A549 (cell line): ENCODE measurements at regions of chr1 and their contacts with region 1.

Region 1: DNA sequence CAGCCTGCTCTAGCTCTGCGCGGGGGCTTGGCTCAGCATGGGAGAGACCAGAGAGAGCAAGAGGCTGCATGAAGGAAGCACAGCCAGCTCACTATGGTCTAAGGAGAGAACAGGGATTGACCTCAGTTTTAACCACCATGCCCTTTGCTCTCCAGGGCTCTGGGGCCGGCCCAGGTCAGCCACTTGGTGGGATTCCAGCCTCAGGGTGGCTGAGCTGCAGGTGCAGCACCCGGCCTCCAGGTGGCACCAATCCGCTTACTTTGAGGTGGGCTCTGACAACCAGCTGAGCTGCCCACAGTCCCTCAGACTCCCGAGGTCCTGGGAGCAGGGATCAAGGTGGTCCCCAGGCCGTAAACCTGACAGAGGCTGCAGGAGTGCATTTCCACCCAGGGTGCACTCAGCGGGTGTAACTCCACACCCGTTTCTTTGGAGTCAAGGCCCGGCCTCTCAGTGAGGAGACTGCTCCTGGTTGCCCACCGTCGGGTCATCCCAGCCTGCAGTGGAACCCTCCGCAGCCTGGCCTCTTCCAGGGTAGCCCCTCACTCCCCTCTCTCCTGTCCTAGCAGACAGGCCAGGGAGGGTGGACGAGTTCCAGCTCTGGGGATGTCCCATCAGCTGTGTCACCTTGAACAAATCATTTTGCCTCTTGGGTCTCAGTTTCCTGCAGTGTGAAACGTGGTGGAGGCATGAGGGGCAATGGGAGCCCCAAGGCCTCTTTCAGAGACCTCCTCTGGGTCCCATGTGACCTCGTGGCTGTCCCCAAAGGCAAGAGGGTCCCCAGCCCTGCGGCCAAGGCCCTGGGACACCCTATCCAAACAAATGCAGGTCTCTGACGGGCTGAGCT is 607 bp upstream of the LGR6 start:
- DNase-seq: peak; percentile 60 to 64
- ATAC-seq: peak; percentile 37 to 78; a peak in 5 of 6 replicates
- H3K4me3 ChIP-seq: peak overlapping the region; percentile 36; the same call in 1 of the 3 replicates
- H3K27ac ChIP-seq: peak overlapping the region; percentile 56 to 76; a peak in 5 of 6 replicates
- H3K4me1 ChIP-seq: peaks cover 9% of the 10 kb centered on the region; the same call in 2 of the 3 replicates
- CTCF ChIP-seq: peak; percentile 88
- EP300 ChIP-seq: no peak
- POLR2A ChIP-seq: no peak
- RAD21 ChIP-seq: peak; percentile 87 to 91

Region 2: GRCh38 chr1:202210385-202210784 is 17.4 kb after region 1 on chr1:
- CTCF ChIA-PET with region 1: interaction called, 42 read pairs
- POLR2A ChIA-PET with region 1: no interaction called
- DNase-seq: peak in 1 of 2 experiments; percentile 52
- ATAC-seq: peak; percentile 73 to 75
- H3K4me3 ChIP-seq: no peak overlapping the region
- H3K27ac ChIP-seq: no peak overlapping the region
- H3K4me1 ChIP-seq: peaks cover 11% of the 10 kb centered on the region
- CTCF ChIP-seq: 0 out of 3 replicates have a peak, but pooled peaks have one; percentile 7
- EP300 ChIP-seq: no peak
- POLR2A ChIP-seq: no peak
- RAD21 ChIP-seq: peak in 1 of 2 experiments; percentile 29; a peak in 3 of 5 replicates

Region 3: DNA sequence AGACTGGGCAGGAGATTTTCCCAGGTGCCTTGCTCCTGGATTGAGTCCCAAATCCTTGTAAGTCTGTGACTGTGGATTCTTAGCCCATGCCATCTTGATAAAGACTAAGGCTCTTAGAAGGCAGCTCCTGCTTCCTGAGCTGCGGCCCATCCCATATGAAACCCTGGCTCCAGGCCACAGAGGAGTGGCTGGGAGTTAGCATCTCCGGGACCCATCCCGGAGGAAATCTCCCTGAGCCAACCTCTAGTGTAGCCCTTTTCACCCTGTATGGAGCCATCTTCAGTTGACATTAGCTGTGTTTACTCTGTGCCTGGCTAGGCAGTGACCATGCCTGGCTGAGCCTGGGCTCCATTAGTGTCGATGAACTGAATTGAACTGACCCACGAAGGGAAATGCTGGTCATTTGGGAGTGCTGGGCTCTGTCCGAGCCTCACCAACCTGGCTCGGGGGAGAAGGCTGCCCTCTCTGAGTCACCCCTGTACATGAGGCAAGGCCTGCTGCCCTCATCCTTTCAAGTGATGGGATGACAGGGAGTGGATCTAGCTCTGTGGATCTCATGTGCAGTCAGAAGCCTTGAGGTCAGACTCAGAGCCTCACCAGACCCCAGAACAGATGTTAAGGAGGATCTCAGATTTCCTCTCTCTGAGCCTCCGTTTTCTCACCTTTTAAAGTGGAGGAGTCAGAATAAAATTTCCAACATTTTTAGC is 38.1 kb after region 1 on chr1:
- CTCF ChIA-PET with region 1: interaction called, 50 read pairs
- POLR2A ChIA-PET with region 1: interaction called, 6 read pairs
- DNase-seq: no peak
- ATAC-seq: no peak
- H3K4me3 ChIP-seq: no peak overlapping the region
- H3K27ac ChIP-seq: peak overlapping the region in 1 of 2 experiments; percentile 3; a peak in 2 of 6 replicates
- H3K4me1 ChIP-seq: peaks cover 12% of the 10 kb centered on the region
- CTCF ChIP-seq: no peak
- EP300 ChIP-seq: no peak
- POLR2A ChIP-seq: no peak
- RAD21 ChIP-seq: no peak

Region 4: GRCh38 chr1:202247894-202248681 is 55.1 kb after region 1 on chr1:
- CTCF ChIA-PET with region 1: interaction called, 14 read pairs
- POLR2A ChIA-PET with region 1: no interaction called
- DNase-seq: no peak
- ATAC-seq: no peak
- H3K4me3 ChIP-seq: no peak overlapping the region
- H3K27ac ChIP-seq: no peak overlapping the region
- H3K4me1 ChIP-seq: no peaks in the 10 kb centered on the region
- CTCF ChIP-seq: no peak
- EP300 ChIP-seq: no peak
- POLR2A ChIP-seq: no peak
- RAD21 ChIP-seq: no peak

Region 5: DNA sequence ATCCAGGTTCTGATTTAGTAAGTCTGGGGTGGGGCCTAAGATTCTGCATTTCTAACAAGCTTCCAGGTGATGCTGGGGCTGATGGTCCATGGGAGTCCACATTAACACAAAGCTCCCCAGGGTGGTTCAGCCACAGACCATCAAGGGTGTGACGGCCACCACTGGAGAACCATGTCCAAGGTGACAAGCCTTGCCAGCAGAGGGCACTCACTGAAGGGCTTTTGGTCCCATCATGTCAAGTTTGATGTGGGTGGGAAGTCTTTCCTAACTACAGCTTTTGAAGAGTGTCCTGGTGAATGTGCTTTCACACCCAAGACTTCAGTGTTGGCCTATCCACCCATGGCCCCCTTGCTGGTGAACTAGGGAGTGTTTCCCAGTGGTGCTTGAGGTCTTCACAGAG is 81.6 kb after region 1 on chr1:
- CTCF ChIA-PET with region 1: interaction called, 17 read pairs
- POLR2A ChIA-PET with region 1: no interaction called
- DNase-seq: peak; percentile 50 to 54
- ATAC-seq: peak in 1 of 2 experiments; percentile 87; a peak in 3 of 6 replicates
- H3K4me3 ChIP-seq: no peak overlapping the region
- H3K27ac ChIP-seq: no peak overlapping the region
- H3K4me1 ChIP-seq: no peaks in the 10 kb centered on the region
- CTCF ChIP-seq: peak; percentile 57
- EP300 ChIP-seq: no peak
- POLR2A ChIP-seq: no peak
- RAD21 ChIP-seq: peak; percentile 58 to 78

Region 6: DNA sequence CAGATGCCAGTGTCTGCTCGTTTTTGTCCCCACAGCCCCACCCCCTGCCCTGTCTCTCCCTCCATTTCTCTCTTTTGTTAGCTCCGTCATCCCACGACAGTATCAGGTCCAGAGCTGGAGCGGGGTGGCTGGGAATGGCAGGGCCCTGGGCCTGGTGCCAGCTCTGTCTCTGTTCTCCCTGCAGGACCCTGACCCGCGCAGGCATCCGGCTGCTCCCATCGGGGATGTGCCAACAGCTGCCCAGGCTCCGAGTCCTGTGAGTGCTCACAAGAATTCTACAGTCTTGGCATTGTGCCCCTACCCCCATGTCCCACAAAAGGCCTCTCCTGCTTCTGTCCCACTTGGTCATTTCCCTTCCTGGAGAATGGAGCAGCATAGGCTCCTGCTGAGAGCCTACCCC is 111.4 kb after region 1 on chr1:
- CTCF ChIA-PET with region 1: interaction called, 77 read pairs
- POLR2A ChIA-PET with region 1: no interaction called
- DNase-seq: no peak
- ATAC-seq: no peak
- H3K4me3 ChIP-seq: no peak overlapping the region
- H3K27ac ChIP-seq: no peak overlapping the region
- H3K4me1 ChIP-seq: no peaks in the 10 kb centered on the region
- CTCF ChIP-seq: no peak
- EP300 ChIP-seq: no peak
- POLR2A ChIP-seq: no peak
- RAD21 ChIP-seq: no peak

Region 7: GRCh38 chr1:202323731-202324130 is 130.7 kb after region 1 on chr1:
- CTCF ChIA-PET with region 1: interaction called, 350 read pairs
- POLR2A ChIA-PET with region 1: interaction called, 3 read pairs
- DNase-seq: no peak
- ATAC-seq: no peak
- H3K4me3 ChIP-seq: no peak overlapping the region
- H3K27ac ChIP-seq: no peak overlapping the region
- H3K4me1 ChIP-seq: no peaks in the 10 kb centered on the region
- CTCF ChIP-seq: no peak
- EP300 ChIP-seq: no peak
- POLR2A ChIP-seq: no peak
- RAD21 ChIP-seq: no peak